ENCODE measurements at regions of chr1 and their contacts with region 1.

Region 1: GRCh38 chr1:92298573-92299476 is at the starts of genes GLMN and RPAP2:
- DNase-seq: peak; percentile 49 to 65
- ATAC-seq: peak; percentile 97 to 98
- H3K4me3 ChIP-seq: peak within 1 kb of the TSS; percentile 80 to 95 (median 90)
- H3K27ac ChIP-seq: peak within 1 kb of the TSS; percentile 89 to 96 (median 94)
- H3K4me1 ChIP-seq: peaks cover 13 to 16% of the 10 kb centered on the region in 2 donors
- H3K27me3 ChIP-seq: no peaks in the 10 kb centered on the region
- CTCF ChIP-seq: no peak
- POLR2A ChIP-seq: peak; percentile 72 to 73
- total RNA-seq, gene GLMN: 2.6 to 9.5 (median 5.2) TPM
- total RNA-seq, gene RPAP2: 11.4 to 19.1 (median 14.7) TPM

Region 2: DNA sequence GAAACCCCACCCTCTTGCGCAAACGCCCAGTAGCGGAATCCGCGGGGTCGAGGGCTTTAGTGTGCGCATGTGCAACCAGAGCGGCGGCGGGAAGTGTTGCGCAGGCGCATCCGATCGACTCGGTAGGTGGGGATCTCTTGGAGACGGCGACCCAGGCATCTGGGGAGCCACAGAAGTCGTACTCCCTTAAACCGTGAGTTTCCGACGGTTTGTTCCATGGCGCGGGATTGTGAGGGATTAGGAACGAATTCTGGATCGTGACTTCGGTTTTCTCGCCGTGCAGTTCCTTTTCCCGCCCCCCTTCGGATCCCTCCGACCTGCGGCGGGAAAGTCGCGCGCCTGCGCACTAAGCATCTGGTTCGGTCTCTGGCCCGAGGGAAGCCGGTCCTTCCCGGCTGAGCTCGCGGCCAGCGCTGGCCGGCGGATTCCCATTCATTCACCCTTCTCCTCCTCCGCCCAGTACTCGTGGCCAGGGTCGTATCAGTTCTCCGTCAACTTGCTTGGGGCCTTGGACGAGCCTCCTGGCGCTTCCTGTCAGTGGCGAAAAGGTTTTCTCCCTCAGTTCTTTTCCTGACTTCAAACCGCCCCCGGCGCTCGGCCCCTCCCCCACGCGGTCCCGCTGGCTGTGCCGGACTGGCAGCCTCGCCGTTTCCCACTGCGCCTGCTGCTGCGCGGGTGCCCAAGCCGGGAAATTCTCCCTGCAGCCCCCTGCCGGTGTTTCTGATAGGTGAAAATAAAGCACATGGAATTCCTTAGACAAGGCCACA is 797.9 kb before region 1 on chr1 and contains the start of gene CDC7:
- in situ Hi-C with region 1: loop called in 1 of 4 experiments (anchors 25 kb)
- intact Hi-C with region 1: no loop called
- DNase-seq: peak; percentile 58 to 75
- ATAC-seq: peak; percentile 91 to 95
- H3K4me3 ChIP-seq: peak within 1 kb of the TSS; percentile 59 to 79 (median 72)
- H3K27ac ChIP-seq: peak within 1 kb of the TSS; percentile 61 to 75 (median 71)
- H3K4me1 ChIP-seq: peaks cover 7 to 15% of the 10 kb centered on the region in 2 donors
- H3K27me3 ChIP-seq: no peaks in the 10 kb centered on the region
- CTCF ChIP-seq: peak in 2 of 5 experiments; percentile 23 to 35
- POLR2A ChIP-seq: no peak
- total RNA-seq, gene CDC7: 0.10 to 0.44 (median 0.20) TPM in 3 of 4 donors, not detected in the other

Measured in gastrocnemius medialis (tissue), 4 donors.